CD4-positive, alpha-beta memory T cell (primary cell): ENCODE measurements at regions of chr1 and their contacts with region 1.

Region 1: DNA sequence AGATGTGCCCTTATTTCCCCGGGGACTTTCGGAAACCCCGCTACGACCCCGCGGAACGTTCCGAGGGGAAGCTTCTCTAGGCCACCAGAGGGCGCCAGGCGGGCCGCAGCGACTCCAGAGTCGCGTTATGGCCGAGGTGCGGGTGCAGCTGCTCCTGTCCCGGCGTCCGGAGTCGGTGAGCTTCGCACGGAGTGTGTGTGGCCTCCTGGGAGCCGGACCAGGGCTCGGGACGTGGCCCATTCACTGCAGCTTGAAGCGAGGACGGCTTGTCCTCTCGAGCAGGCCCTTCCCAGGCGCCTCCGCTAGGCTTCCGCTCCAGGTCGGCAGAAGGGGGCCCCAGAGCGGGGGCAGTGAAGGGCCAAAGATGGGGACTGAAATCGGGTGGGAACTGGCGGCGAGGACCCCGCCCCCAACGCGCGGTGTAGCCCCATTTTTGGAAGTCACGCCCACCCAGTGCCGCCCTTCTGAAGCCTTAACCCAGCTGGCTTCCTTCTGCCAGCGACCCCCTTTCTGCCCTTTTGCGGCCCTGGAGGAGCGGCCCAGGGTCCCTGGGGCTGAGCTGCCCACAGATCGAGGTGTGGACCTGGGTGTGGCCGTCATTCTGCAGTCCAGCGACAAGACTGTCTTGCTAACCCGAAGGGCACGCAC is at the start of gene NUDT17:
- DNase-seq: peak; percentile 67 to 75 (median 68)
- H3K4me3 ChIP-seq: peak within 1 kb of the TSS; percentile 18 to 77
- H3K4me3 Mint-ChIP-seq: no peak within 1 kb of the TSS
- H3K27ac ChIP-seq: peak within 1 kb of the TSS; percentile 63
- H3K27ac Mint-ChIP-seq: peak within 1 kb of the TSS in 6 of 7 donors; percentile 43 to 91 (median 81)
- H3K4me1 ChIP-seq: peaks cover 11% of the 10 kb centered on the region
- H3K4me1 Mint-ChIP-seq: peaks cover 6 to 7% (median 6%) of the 10 kb centered on the region in 4 donors
- H3K27me3 ChIP-seq: no peaks in the 10 kb centered on the region
- H3K27me3 Mint-ChIP-seq: no peaks in the 10 kb centered on the region
- total RNA-seq, gene NUDT17: 3.1 to 5.6 TPM

Region 2: GRCh38 chr1:145711213-145711651 is 134.4 kb before region 1 on chr1:
- CTCF ChIA-PET with region 1: no interaction called
- POLR2A ChIA-PET with region 1: no interaction called
- intact Hi-C with region 1: no loop called
- DNase-seq: no peak
- H3K4me3 ChIP-seq: no peak overlapping the region
- H3K4me3 Mint-ChIP-seq: no peak overlapping the region
- H3K27ac ChIP-seq: no peak overlapping the region
- H3K27ac Mint-ChIP-seq: peak overlapping the region in 1 of 7 donors; percentile 70
- H3K4me1 ChIP-seq: no peaks in the 10 kb centered on the region
- H3K4me1 Mint-ChIP-seq: no peaks in the 10 kb centered on the region
- H3K27me3 ChIP-seq: no peaks in the 10 kb centered on the region
- H3K27me3 Mint-ChIP-seq: peaks cover 0 to 1% of the 10 kb centered on the region in 2 donors

Region 3: GRCh38 chr1:145765574-145765973 is 80.1 kb before region 1 on chr1:
- CTCF ChIA-PET with region 1: no interaction called
- POLR2A ChIA-PET with region 1: no interaction called
- intact Hi-C with region 1: no loop called
- DNase-seq: no peak
- H3K4me3 ChIP-seq: no peak overlapping the region
- H3K4me3 Mint-ChIP-seq: no peak overlapping the region
- H3K27ac ChIP-seq: no peak overlapping the region
- H3K27ac Mint-ChIP-seq: no peak overlapping the region
- H3K4me1 ChIP-seq: no peaks in the 10 kb centered on the region
- H3K4me1 Mint-ChIP-seq: peaks cover 0 to 3% (median 0%) of the 10 kb centered on the region in 4 donors
- H3K27me3 ChIP-seq: no peaks in the 10 kb centered on the region
- H3K27me3 Mint-ChIP-seq: no peaks in the 10 kb centered on the region

Region 4: GRCh38 chr1:145777357-145778145 is 68.1 kb before region 1 on chr1:
- CTCF ChIA-PET with region 1: no interaction called
- POLR2A ChIA-PET with region 1: no interaction called
- intact Hi-C with region 1: no loop called
- DNase-seq: no peak
- H3K4me3 ChIP-seq: no peak overlapping the region
- H3K4me3 Mint-ChIP-seq: no peak overlapping the region
- H3K27ac ChIP-seq: no peak overlapping the region
- H3K27ac Mint-ChIP-seq: no peak overlapping the region
- H3K4me1 ChIP-seq: no peaks in the 10 kb centered on the region
- H3K4me1 Mint-ChIP-seq: peaks cover 6 to 14% (median 9%) of the 10 kb centered on the region in 4 donors
- H3K27me3 ChIP-seq: no peaks in the 10 kb centered on the region
- H3K27me3 Mint-ChIP-seq: no peaks in the 10 kb centered on the region

Region 5: GRCh38 chr1:145823565-145824498 is 21.8 kb before region 1 on chr1 and contains the starts of genes POLR3C and RNF115:
- CTCF ChIA-PET with region 1: interaction called, 31 read pairs
- POLR2A ChIA-PET with region 1: interaction called, 32 read pairs
- intact Hi-C with region 1: loop called (anchors 2 kb)
- DNase-seq: peak; percentile 84 to 92 (median 86)
- H3K4me3 ChIP-seq: peak within 1 kb of the TSS; percentile 93 to 100
- H3K4me3 Mint-ChIP-seq: peak within 1 kb of the TSS; percentile 97 to 99 (median 98)
- H3K27ac ChIP-seq: peak within 1 kb of the TSS; percentile 78
- H3K27ac Mint-ChIP-seq: peak within 1 kb of the TSS; percentile 90 to 99 (median 97)
- H3K4me1 ChIP-seq: peaks cover 23% of the 10 kb centered on the region
- H3K4me1 Mint-ChIP-seq: peaks cover 17 to 35% (median 24%) of the 10 kb centered on the region in 4 donors
- H3K27me3 ChIP-seq: no peaks in the 10 kb centered on the region
- H3K27me3 Mint-ChIP-seq: no peaks in the 10 kb centered on the region
- total RNA-seq, gene POLR3C: 43.5 to 44.8 TPM
- total RNA-seq, gene RNF115: 15.2 to 15.3 TPM

Region 6: GRCh38 chr1:145885738-145886287 is 40.2 kb after region 1 on chr1 and contains the start of gene ANKRD35:
- CTCF ChIA-PET with region 1: interaction called, 78 read pairs
- POLR2A ChIA-PET with region 1: interaction called, 7 read pairs
- intact Hi-C with region 1: no loop called
- DNase-seq: peak; percentile 83 to 91 (median 85)
- H3K4me3 ChIP-seq: peak within 1 kb of the TSS; percentile 6 to 74
- H3K4me3 Mint-ChIP-seq: peak within 1 kb of the TSS; percentile 74 to 88 (median 84)
- H3K27ac ChIP-seq: no peak within 1 kb of the TSS
- H3K27ac Mint-ChIP-seq: peak within 1 kb of the TSS in 6 of 7 donors; percentile 3 to 91 (median 62)
- H3K4me1 ChIP-seq: peaks cover 13% of the 10 kb centered on the region
- H3K4me1 Mint-ChIP-seq: peaks cover 10 to 28% (median 14%) of the 10 kb centered on the region in 4 donors
- H3K27me3 ChIP-seq: peaks cover 11% of the 10 kb centered on the region
- H3K27me3 Mint-ChIP-seq: peaks cover 10 to 21% of the 10 kb centered on the region in 2 donors
- total RNA-seq, gene ANKRD35: not detected

Region 7: GRCh38 chr1:145906954-145907753 is 61.5 kb after region 1 on chr1:
- CTCF ChIA-PET with region 1: interaction called, 121 read pairs
- POLR2A ChIA-PET with region 1: interaction called, 5 read pairs
- intact Hi-C with region 1: loop called (anchors 1 kb)
- DNase-seq: no peak
- H3K4me3 ChIP-seq: no peak overlapping the region
- H3K4me3 Mint-ChIP-seq: no peak overlapping the region
- H3K27ac ChIP-seq: no peak overlapping the region
- H3K27ac Mint-ChIP-seq: no peak overlapping the region
- H3K4me1 ChIP-seq: no peaks in the 10 kb centered on the region
- H3K4me1 Mint-ChIP-seq: peaks cover 4 to 5% (median 5%) of the 10 kb centered on the region in 4 donors
- H3K27me3 ChIP-seq: no peaks in the 10 kb centered on the region
- H3K27me3 Mint-ChIP-seq: no peaks in the 10 kb centered on the region

Region 8: GRCh38 chr1:145927063-145927886 is 81.6 kb after region 1 on chr1 and contains the start of gene RBM8A:
- CTCF ChIA-PET with region 1: interaction called, 10 read pairs
- POLR2A ChIA-PET with region 1: interaction called, 11 read pairs
- intact Hi-C with region 1: no loop called
- DNase-seq: peak; percentile 94 to 98 (median 97)
- H3K4me3 ChIP-seq: peak within 1 kb of the TSS; percentile 96 to 99
- H3K4me3 Mint-ChIP-seq: peak within 1 kb of the TSS in 5 of 8 donors; percentile 20 to 69 (median 42)
- H3K27ac ChIP-seq: peak within 1 kb of the TSS; percentile 96
- H3K27ac Mint-ChIP-seq: peak within 1 kb of the TSS in 4 of 7 donors; percentile 72 to 94 (median 82)
- H3K4me1 ChIP-seq: peaks cover 29% of the 10 kb centered on the region
- H3K4me1 Mint-ChIP-seq: peaks cover 10 to 25% (median 17%) of the 10 kb centered on the region in 4 donors
- H3K27me3 ChIP-seq: no peaks in the 10 kb centered on the region
- H3K27me3 Mint-ChIP-seq: no peaks in the 10 kb centered on the region
- total RNA-seq, gene RBM8A: 116 to 122 TPM

Region 9: DNA sequence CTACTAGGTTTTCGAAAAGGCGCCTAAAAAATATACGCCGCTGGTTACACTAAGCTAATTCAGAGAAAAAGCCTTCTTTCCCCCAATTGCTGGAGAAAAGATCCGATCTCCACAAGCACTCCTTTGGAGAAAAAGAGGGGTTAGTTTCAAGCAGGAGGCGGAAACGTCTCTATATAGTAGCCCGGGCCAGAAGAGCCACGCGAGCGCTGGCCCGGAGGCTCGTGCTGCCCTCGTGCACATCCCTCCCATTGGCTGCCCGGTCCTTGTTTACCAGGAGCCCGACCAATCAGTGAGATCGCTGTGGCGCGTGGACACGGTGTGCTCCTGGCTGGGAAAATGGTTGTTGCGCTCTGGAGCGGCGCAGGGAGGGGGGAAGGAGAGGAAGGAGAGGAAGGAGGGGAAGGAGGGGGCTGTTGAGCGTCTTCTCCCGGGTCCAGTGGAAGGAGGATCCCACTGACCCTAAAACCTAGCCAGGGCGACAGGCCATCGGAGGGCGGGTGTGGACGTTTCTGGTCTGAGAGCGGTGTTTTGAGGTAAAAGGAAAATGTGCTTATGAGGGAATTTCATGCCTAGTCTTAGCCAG is 150.9 kb after region 1 on chr1 and contains the start of gene TXNIP:
- CTCF ChIA-PET with region 1: interaction called, 5 read pairs
- POLR2A ChIA-PET with region 1: interaction called, 14 read pairs
- intact Hi-C with region 1: no loop called
- DNase-seq: peak; percentile 90 to 96 (median 94)
- H3K4me3 ChIP-seq: peak within 1 kb of the TSS; percentile 97 to 99
- H3K4me3 Mint-ChIP-seq: peak within 1 kb of the TSS; percentile 96 to 99 (median 98)
- H3K27ac ChIP-seq: peak within 1 kb of the TSS; percentile 75
- H3K27ac Mint-ChIP-seq: peak within 1 kb of the TSS; percentile 96 to 99 (median 97)
- H3K4me1 ChIP-seq: peaks cover 62% of the 10 kb centered on the region
- H3K4me1 Mint-ChIP-seq: peaks cover 39 to 89% (median 50%) of the 10 kb centered on the region in 4 donors
- H3K27me3 ChIP-seq: no peaks in the 10 kb centered on the region
- H3K27me3 Mint-ChIP-seq: no peaks in the 10 kb centered on the region
- total RNA-seq, gene TXNIP: 933 to 985 TPM

Region 10: DNA sequence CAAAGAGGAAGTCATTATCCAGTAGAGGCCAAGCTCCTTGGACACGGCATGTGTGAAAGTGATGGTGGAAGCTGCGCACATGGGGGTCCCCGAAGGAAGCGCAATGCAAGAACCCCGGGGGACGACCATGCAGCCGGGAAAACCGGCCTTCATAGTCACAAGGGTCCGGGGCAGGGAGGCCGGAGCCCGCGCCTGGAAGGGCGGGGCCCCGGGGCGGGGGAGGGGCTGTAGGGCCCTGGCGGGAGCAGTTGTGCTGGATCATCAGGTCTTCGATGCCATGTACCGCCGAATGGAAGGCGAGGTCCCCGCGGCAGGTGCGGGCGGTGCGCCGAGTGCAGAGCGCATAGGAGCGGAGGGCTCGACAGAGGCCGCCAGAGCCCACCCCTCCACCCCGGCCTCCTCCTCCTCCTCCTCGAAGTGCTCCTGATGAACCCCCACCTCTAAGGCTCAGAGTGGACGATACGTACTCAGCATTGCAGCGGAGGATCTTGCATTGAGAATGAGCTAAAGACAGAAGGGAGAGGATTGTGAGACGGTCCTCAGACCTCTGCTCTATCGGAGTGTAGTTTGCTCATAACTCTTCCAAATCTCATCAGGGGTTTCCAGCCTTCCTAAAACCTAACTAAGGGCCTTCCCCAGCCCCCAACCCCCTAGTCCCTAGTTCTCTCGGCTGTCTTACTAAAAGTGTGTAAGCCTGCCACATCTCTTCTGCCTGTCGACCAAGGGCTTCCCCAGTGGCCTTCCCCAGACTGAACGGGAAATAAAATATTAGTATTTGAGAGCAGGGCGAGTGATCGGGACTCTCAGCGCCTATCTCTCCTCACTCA is 173.8 kb after region 1 on chr1:
- CTCF ChIA-PET with region 1: interaction called, 264 read pairs
- POLR2A ChIA-PET with region 1: interaction called, 3 read pairs
- intact Hi-C with region 1: no loop called
- DNase-seq: no peak
- H3K4me3 ChIP-seq: no peak overlapping the region
- H3K4me3 Mint-ChIP-seq: peak overlapping the region in 5 of 8 donors; percentile 22 to 72 (median 51)
- H3K27ac ChIP-seq: no peak overlapping the region
- H3K27ac Mint-ChIP-seq: no peak overlapping the region
- H3K4me1 ChIP-seq: peaks cover 12% of the 10 kb centered on the region
- H3K4me1 Mint-ChIP-seq: peaks cover 8 to 10% (median 9%) of the 10 kb centered on the region in 4 donors
- H3K27me3 ChIP-seq: peaks cover 34% of the 10 kb centered on the region
- H3K27me3 Mint-ChIP-seq: peaks cover 35 to 40% of the 10 kb centered on the region in 2 donors